ENCODE measurements at regions of chr10 and their contacts with region 1.

Region 1: GRCh38 chr10:124049484-124049883 is 43.9 kb downstream of the CHST15 start:
- DNase-seq: no peak
- ATAC-seq: peak; percentile 20
- H3K4me3 ChIP-seq: peak overlapping the region in 1 of 3 experiments; percentile 45; a peak in 2 of 6 replicates
- H3K27ac ChIP-seq: peak overlapping the region; percentile 83
- H3K4me1 ChIP-seq: peaks cover 100% of the 10 kb centered on the region
- H3K27me3 ChIP-seq: no peaks in the 10 kb centered on the region
- CTCF ChIP-seq: no peak
- EP300 ChIP-seq: no peak
- POLR2A ChIP-seq: no peak
- RAD21 ChIP-seq: no peak

Region 2: DNA sequence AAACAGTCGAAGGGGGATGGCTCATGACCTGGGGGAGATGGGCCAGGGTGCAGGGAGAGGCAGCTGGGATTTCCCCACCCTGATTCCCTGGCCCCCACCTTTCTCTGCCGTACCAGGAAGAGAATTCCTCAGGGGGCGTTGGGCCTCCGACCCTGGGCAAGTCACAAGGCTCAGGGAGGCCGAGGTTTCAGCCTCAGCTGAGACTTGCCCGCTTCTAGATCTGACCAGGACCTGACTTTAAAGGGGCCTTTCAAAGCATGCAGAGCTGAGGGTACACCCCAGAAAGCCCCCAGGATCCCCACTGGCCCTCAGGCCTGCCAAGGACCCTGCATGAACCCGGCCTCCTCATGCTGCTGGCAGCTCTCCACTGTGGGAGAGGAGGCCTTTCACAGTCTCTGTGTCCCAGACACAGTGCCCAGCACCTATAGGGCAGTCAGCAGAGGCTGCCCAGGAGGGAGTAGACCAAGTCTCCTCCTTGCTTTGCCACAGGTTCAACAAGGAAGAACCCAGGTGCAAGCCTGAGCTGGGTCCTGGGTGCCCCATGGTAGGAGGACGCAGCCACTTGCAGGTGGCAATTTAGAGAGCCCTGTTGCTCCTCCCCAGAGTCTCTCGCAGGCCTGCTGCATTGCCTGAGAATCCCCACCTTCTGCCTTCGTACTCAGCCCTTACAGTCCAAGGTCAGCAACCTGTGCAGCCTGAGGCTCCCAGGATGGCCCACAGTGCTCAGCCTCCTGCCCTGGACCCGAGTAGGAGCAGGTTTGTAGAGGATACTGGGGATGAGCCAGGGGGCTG is 45.4 kb before region 1 on chr10:
- CTCF ChIA-PET with region 1: no interaction called
- POLR2A ChIA-PET with region 1: interaction called, 10 read pairs
- in situ Hi-C with region 1: no loop called
- intact Hi-C with region 1: no loop called
- DNase-seq: no peak
- ATAC-seq: peak; percentile 47
- H3K4me3 ChIP-seq: 0 out of 6 replicates have a peak overlapping the region, but pooled peaks of 1 of the 3 experiments have one; percentile 1
- H3K27ac ChIP-seq: peak overlapping the region; percentile 30
- H3K4me1 ChIP-seq: peaks cover 48% of the 10 kb centered on the region
- H3K27me3 ChIP-seq: no peaks in the 10 kb centered on the region
- CTCF ChIP-seq: no peak
- EP300 ChIP-seq: no peak
- POLR2A ChIP-seq: peak in 1 of 2 experiments; percentile 59; a peak in 1 of 4 replicates
- RAD21 ChIP-seq: no peak

Region 3: DNA sequence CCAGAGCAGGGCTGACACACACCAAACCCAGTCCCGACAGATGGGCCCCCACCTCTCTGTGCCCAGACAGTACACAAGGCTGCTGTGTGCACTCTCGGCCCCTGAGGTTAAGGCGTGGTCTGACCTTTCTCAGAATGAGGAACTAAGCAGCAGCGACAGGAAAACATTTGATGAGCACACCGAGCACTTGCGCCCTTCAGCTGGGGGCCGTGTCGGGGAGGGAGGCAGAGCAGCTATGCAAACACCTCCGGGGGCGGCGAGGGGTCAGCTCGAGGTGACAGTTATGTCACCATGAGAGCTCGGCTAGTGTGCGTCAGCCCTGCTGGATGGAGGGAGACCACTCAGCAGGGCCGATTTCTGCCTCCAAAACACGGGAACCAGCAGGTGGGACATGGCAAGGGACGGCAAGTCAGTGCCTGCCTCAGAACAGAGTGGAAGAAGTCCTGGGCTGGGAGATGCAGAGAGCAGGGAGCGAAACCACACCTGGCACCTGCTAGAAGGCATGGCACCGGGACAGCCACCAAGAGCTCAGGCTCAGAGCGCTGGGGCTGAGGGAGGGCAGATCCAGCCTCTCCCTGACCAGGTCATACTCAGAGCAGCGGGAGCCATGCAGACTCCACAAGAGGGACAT is 13.4 kb before region 1 on chr10:
- CTCF ChIA-PET with region 1: no interaction called
- POLR2A ChIA-PET with region 1: interaction called, 31 read pairs
- in situ Hi-C with region 1: no loop called
- intact Hi-C with region 1: no loop called
- DNase-seq: peak; percentile 96
- ATAC-seq: peak; percentile 96
- H3K4me3 ChIP-seq: peak overlapping the region in 1 of 3 experiments; percentile 5; a peak in 1 of 6 replicates
- H3K27ac ChIP-seq: peak overlapping the region; percentile 50
- H3K4me1 ChIP-seq: peaks cover 64% of the 10 kb centered on the region
- H3K27me3 ChIP-seq: no peaks in the 10 kb centered on the region
- CTCF ChIP-seq: peak; percentile 38; the same call in 1 of the 2 replicates
- EP300 ChIP-seq: peak in 1 of 2 experiments; percentile 92; a peak in 2 of 4 replicates
- POLR2A ChIP-seq: 0 out of 4 replicates have a peak, but pooled peaks of 1 of the 2 experiments have one; percentile 37
- RAD21 ChIP-seq: no peak

Region 4: DNA sequence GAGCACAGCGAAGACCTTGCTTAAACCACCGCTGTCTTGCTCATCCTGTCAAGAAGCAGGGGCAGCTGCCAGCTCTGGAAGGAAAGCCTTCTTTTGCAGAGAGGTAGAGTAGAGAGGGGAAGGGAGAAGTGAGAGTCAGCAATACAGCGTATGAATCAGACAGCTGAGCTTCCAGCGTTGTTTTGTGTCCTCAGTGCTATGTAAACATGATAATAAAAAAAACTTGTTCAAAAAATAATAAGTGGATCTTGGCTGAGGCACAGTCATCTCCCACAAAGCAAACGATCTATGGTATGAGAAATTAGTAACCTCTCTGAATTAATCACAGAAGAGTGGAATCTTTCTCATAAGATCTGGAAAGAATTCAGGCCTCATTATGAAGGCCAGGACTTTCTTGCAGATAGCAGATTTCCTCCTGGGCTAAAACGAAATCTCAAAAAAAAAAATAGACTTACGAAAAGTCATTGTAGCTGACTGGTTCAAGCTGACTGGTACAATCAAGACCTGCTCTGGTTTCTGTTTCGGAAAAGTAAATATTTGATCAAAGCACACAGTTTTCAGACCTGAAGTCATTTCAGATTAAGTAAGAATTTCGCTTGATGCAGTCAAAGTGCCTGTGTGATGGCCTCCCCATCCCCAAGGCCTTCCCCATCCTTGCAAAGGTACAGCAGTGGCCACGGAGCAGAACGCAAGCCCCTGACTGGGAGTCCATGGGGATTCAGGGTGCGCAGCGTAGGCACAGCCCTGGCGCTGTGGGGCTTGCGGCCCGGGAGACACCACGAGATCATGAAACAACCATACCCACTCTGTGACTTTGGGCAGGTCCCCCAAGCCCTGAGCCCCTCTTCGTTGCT is 14.5 kb after region 1 on chr10:
- CTCF ChIA-PET with region 1: no interaction called
- POLR2A ChIA-PET with region 1: interaction called, 30 read pairs
- in situ Hi-C with region 1: no loop called
- intact Hi-C with region 1: loop called (anchors 2 kb)
- DNase-seq: peak; percentile 78
- ATAC-seq: peak; percentile 74
- H3K4me3 ChIP-seq: no peak overlapping the region; a peak in 3 of 6 replicates
- H3K27ac ChIP-seq: peak overlapping the region; percentile 56
- H3K4me1 ChIP-seq: peaks cover 97% of the 10 kb centered on the region
- H3K27me3 ChIP-seq: no peaks in the 10 kb centered on the region
- CTCF ChIP-seq: no peak
- EP300 ChIP-seq: no peak
- POLR2A ChIP-seq: no peak
- RAD21 ChIP-seq: no peak

Region 5: GRCh38 chr10:124092860-124093773 is 43.6 kb after region 1 on chr10 and contains the start of gene CHST15:
- CTCF ChIA-PET with region 1: no interaction called
- POLR2A ChIA-PET with region 1: interaction called, 20 read pairs
- in situ Hi-C with region 1: no loop called
- intact Hi-C with region 1: no loop called
- DNase-seq: peak; percentile 86
- ATAC-seq: peak; percentile 57
- H3K4me3 ChIP-seq: peak within 1 kb of the TSS; percentile 86 to 91 (median 91)
- H3K27ac ChIP-seq: peak within 1 kb of the TSS; percentile 59
- H3K4me1 ChIP-seq: peaks cover 76% of the 10 kb centered on the region
- H3K27me3 ChIP-seq: peaks cover 0 to 36% of the 10 kb centered on the region in 2 experiments; a peak in 3 of 5 replicates
- CTCF ChIP-seq: peak; percentile 50
- EP300 ChIP-seq: peak in 1 of 2 experiments; percentile 70; a peak in 2 of 4 replicates
- POLR2A ChIP-seq: peak in 1 of 2 experiments; percentile 68; a peak in 3 of 4 replicates
- RAD21 ChIP-seq: 0 out of 2 replicates have a peak, but pooled peaks have one; percentile 32
- total RNA-seq, gene CHST15: 1.1 and 1.4 TPM in 2 replicates

Measured in HepG2 (cell line).